Activated CD8-positive, alpha-beta T cell treated with anti-CD3 and anti-CD28 coated beads, Interleukin-2, amount 10 ng/mL, durations not matched to agents 7 days and 5 days (primary cell): ENCODE measurements at regions of chr3 and their contacts with region 1.

Region 1: DNA sequence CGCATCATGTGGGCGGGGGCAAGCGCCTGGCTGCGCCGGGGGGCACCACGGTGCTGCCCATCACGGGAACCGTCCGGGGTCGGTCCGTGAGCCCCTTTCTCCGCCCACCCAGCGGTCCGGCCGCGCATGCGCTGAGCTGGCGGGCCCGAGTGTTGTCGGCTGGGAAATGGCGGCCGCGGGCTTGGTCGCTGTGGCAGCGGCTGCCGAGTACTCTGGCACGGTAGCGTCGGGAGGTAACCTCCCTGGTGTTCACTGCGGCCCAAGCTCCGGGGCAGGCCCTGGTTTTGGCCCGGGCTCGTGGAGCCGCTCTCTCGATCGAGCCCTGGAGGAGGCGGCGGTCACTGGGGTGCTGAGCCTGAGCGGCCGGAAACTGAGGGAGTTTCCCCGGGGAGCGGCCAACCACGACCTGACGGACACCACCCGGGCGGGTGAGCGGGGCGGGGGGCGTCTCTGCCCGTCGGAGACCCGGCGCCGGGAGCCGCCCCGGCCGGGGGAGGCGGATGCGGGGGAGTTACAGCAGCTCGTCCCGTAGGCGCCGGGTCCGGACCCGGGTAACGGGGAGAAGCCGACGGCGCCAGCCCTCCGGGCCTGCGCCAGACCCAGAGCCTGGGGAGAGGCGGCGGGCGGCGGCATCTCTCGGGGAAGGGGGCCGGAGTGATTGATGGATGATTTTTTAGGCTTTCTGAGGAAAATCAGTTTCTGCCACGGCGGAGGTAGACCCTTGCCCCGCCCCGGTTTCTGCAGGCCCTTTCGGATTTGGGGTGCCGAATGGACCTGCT is at the start of gene LRCH3:
- DNase-seq: peak; percentile 87
- ATAC-seq: peak; percentile 82
- H3K4me3 Mint-ChIP-seq: peak within 1 kb of the TSS; percentile 87
- H3K27ac Mint-ChIP-seq: peak within 1 kb of the TSS; percentile 98
- H3K4me1 Mint-ChIP-seq: peaks cover 40% of the 10 kb centered on the region
- H3K27me3 Mint-ChIP-seq: no peaks in the 10 kb centered on the region
- total RNA-seq, gene LRCH3: 50.7 to 60.4 TPM

Region 2: DNA sequence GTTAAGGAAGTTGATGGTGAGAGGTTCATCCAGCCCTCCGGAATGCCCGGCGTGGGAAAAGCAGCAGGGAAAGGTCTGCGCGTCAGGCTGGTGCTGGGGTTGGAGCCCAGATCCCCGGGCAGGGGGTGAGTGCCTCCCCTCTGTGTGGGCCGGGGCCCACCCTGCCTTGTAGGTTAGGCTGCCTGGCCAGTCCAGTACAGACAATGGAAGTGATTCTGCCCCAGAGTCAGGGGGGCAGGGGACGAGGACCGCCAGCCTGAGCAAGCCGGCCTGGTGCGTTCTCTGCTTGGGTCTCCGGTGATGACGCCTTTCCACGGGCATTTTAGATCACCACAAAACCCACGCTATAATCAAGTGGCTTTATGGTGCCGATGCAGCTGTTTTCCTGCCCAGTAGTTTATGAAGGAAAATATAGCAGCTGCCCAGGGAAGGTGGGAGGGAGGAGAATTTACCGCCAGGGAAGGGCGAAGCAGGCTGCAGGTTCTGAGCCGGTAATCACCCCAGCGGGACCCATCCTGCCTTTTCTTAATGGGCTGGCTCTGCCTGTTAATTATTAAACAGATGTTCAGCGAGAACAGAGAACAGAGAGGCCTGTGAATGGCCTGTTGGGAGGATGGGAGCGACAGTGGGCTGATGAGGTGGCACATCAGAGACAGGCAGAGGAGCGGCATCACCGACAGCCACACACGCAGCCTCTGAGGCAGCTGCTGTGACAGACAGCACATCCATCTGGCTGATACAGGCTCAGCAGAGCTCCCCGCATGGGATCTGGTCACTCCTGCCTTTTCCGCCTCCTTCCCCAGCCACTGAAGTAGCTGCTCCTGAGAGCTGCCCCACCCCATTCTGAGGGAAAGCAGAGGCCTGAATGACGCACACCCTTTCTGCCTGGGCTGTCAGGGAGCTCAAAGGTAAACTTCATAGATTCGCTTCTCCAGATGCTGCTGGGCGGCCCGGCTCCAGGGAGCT is 270.7 kb before region 1 on chr3:
- CTCF ChIA-PET with region 1: no interaction called
- POLR2A ChIA-PET with region 1: no interaction called
- DNase-seq: no peak
- ATAC-seq: no peak
- H3K4me3 Mint-ChIP-seq: no peak overlapping the region
- H3K27ac Mint-ChIP-seq: no peak overlapping the region
- H3K4me1 Mint-ChIP-seq: peaks cover 19% of the 10 kb centered on the region
- H3K27me3 Mint-ChIP-seq: no peaks in the 10 kb centered on the region

Region 3: GRCh38 chr3:197613199-197613598 is 178.1 kb before region 1 on chr3:
- CTCF ChIA-PET with region 1: no interaction called
- POLR2A ChIA-PET with region 1: no interaction called
- DNase-seq: peak; percentile 54
- ATAC-seq: peak; percentile 90
- H3K4me3 Mint-ChIP-seq: peak overlapping the region; percentile 12
- H3K27ac Mint-ChIP-seq: peak overlapping the region; percentile 85
- H3K4me1 Mint-ChIP-seq: peaks cover 28% of the 10 kb centered on the region
- H3K27me3 Mint-ChIP-seq: no peaks in the 10 kb centered on the region

Region 4: GRCh38 chr3:197711973-197712707 is 79.2 kb before region 1 on chr3:
- CTCF ChIA-PET with region 1: no interaction called
- POLR2A ChIA-PET with region 1: interaction called, 24 read pairs
- DNase-seq: peak; percentile 92
- ATAC-seq: peak; percentile 100
- H3K4me3 Mint-ChIP-seq: peak overlapping the region; percentile 77
- H3K27ac Mint-ChIP-seq: peak overlapping the region; percentile 98
- H3K4me1 Mint-ChIP-seq: peaks cover 38% of the 10 kb centered on the region
- H3K27me3 Mint-ChIP-seq: no peaks in the 10 kb centered on the region

Region 5: GRCh38 chr3:197749601-197750395 is 41.5 kb before region 1 on chr3 and contains the start of gene FYTTD1:
- CTCF ChIA-PET with region 1: interaction called, 4 read pairs
- POLR2A ChIA-PET with region 1: interaction called, 12 read pairs
- DNase-seq: peak; percentile 85
- ATAC-seq: peak; percentile 89
- H3K4me3 Mint-ChIP-seq: peak within 1 kb of the TSS; percentile 87
- H3K27ac Mint-ChIP-seq: peak within 1 kb of the TSS; percentile 89
- H3K4me1 Mint-ChIP-seq: peaks cover 36% of the 10 kb centered on the region
- H3K27me3 Mint-ChIP-seq: peaks cover 2% of the 10 kb centered on the region
- total RNA-seq, gene FYTTD1: 38.4 to 41.8 TPM

Region 6: DNA sequence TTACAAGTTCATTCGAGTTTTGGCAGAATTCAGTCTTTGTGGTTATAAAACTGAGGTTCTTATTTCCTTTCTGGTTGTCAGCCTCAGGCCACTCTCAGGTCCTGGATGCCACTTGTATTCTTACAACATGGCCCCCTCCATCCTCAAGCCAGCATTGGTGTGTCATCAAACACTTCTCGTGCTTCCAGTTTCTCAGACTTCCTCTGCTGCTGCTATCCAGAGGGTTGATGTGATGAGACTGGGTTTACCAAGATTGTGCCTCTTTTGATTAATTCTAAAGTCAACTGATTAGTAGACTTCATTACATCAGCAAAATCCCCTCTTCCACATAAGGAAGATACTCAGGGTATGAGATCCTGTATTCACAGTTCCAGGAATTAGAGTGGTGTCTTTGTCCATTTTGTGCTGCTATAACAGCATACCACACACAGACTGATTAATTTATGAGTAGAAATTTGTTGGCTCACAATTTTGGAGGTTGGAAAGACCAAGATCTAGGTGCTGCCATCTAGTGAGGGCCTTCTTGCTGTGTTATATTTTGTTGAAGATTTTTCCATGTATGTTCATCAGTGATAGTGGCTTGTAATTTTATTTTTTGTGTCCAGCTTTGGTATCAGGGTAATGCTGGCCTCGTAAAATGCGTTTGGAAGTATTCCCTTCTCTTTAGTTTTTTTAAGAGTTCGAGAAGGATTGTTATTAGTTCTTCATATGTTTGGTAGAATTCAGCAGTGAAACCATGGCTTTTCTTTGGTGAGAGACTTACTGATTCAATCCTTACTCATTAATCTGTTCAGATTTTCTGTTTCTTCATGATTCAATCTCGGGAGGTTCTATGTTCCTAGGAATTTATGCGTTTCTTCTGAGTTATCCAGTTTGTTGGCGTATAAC is 10.8 kb after region 1 on chr3:
- CTCF ChIA-PET with region 1: interaction called, 11 read pairs
- POLR2A ChIA-PET with region 1: interaction called, 9 read pairs
- DNase-seq: peak; percentile 62
- ATAC-seq: peak; percentile 77
- H3K4me3 Mint-ChIP-seq: peak overlapping the region; percentile 37
- H3K27ac Mint-ChIP-seq: peak overlapping the region; percentile 78
- H3K4me1 Mint-ChIP-seq: peaks cover 45% of the 10 kb centered on the region
- H3K27me3 Mint-ChIP-seq: no peaks in the 10 kb centered on the region